GM10248 (cell line): ENCODE measurements at regions of chr14 and their contacts with region 1.

Region 1: GRCh38 chr14:22549981-22550673 is 38.9 kb downstream of the DAD1 start:
- DNase-seq: peak; percentile 53
- CTCF ChIP-seq: no peak

Region 2: GRCh38 chr14:22519877-22520685 is 30.0 kb before region 1 on chr14:
- CTCF ChIA-PET with region 1: interaction called, 12 read pairs
- POLR2A ChIA-PET with region 1: no interaction called
- DNase-seq: no peak
- CTCF ChIP-seq: no peak

Region 3: GRCh38 chr14:22531451-22532344 is 18.4 kb before region 1 on chr14:
- CTCF ChIA-PET with region 1: interaction called, 20 read pairs
- POLR2A ChIA-PET with region 1: interaction called, 6 read pairs
- DNase-seq: peak; percentile 60
- CTCF ChIP-seq: no peak

Region 4: GRCh38 chr14:22536853-22537338 is 13.2 kb before region 1 on chr14:
- CTCF ChIA-PET with region 1: interaction called, 30 read pairs
- POLR2A ChIA-PET with region 1: interaction called, 6 read pairs
- DNase-seq: peak; percentile 77
- CTCF ChIP-seq: no peak

Region 5: DNA sequence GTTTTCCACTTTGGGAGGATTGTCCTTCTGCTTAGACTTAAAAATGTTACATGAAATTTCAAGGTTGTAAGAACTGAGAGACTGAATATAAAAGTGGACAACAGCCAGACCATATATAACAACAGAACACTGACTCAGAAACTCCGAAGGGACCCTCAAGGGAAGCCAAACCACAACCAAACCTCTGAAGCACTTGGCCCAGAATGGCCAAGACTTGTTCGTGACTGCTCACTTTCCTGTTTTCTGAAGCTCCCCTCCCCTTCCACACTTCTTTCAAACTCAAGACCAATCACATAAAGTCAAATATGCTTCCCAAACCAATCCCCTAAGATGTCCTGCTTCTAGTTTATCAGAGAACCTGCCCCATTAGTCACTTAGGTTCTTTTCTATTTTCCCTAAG is 80.4 kb after region 1 on chr14:
- CTCF ChIA-PET with region 1: no interaction called
- POLR2A ChIA-PET with region 1: no interaction called
- DNase-seq: no peak
- CTCF ChIP-seq: no peak